Right ventricle myocardium superior (tissue), 1 donor: ENCODE measurements at regions of chr7 and their contacts with region 1.

Region 1: DNA sequence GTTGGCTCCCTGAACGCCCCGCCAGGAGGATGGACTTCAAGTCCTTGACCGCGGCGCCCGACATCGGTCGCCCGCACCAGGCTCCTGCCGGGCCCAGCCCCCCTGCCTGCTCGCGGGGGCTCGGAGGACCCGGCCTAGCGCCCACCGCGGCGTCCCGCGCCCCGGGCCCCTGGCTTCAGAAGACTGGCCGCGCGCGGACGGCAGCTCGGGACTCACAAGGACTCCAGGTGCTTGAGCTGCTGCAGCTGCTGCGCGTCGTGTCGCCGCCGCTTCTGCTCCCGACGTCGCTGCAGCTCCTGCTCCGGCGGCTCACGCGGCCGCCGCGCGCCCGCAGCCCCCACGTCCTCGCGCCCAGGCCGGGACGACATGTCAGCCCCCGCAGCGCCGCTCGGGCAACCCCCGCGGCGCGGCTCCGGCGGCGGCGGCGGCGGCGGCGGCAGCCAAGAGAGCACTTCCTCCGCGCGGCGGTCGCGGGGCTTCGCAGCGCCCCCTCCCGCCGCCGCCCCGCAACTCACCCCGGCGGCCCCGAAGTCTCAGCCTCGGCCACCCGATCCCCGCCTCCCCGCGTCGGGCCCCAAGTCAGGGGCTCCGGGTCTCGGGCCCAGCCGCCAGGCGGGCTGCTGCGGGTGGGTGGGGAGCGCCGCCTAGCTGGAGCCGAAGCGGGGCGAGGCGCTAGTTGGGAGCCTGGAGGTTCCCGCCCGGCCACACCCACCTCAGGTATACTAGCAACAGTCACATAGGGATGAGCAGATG is at the start of gene RP9:
- DNase-seq: peak; percentile 81
- ATAC-seq: peak; percentile 93
- total RNA-seq, gene RP9: 20.1 TPM

Region 2: DNA sequence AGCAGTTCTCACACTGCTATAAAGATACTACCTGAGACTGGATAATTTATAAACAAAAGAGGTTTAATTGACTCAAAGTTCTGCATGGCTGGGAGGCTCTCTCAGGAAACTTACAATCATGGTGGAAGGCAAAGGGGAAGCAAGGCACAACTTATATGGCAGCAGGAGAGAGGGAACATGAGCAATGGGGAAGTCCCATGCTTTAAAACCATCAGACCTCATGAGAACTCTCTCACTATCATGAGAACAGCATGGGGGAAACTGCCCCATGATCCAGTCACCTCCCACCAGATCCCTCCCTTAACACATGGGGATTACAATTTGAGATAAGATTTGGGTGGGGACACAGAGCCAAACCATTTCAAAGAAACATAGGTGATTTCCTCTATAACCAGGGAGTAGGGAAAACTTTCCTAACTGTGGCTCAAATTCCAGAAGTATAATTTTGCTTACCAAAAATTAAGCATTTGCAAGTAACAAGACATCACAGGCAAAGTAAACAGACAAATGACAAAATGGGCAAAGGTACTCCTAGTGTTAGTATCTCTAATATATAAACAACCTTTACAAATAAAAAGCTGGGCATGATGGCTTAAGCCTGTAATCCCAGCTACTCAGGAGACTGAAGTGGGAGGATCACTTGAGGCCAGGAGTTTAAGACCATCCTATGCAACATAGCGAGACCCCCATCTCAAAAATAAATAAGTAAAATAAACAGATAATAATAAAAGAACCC is 305.6 kb before region 1 on chr7:
- intact Hi-C with region 1: loop called (anchors 10 kb)
- DNase-seq: no peak
- ATAC-seq: no peak

Region 3: DNA sequence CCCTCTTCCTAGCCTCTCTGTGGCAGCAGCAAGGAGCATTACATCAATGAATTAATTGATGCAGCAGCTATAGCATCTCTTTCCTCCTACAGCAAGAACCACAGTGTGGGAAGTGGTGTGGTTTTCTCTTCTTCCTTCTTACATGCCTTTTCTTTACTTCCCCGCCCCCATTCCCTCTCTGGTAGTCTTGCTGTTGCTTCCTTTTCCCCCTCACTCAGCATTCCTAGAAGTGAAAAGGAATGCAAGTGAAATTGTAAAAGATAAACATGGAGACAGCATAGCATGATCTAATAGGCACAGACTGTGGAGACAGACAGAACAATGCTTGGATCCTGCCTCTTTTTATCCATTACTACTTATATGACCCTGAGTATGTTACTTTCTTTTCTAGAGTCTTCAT is 425.7 kb after region 1 on chr7:
- intact Hi-C with region 1: no loop called
- DNase-seq: no peak
- ATAC-seq: no peak